ENCODE measurements at regions of chr4 and their contacts with region 1.

Region 1: GRCh38 chr4:78644744-78645330 is 93.3 kb downstream of the ANXA3 start:
- DNase-seq: peak; percentile 24 to 74
- ATAC-seq: peak; percentile 81 to 96 (median 90)
- H3K4me3 ChIP-seq: no peak overlapping the region
- H3K27ac ChIP-seq: peak overlapping the region in 7 of 10 donors; percentile 68 to 90 (median 73)
- H3K4me1 ChIP-seq: peaks cover 0 to 48% (median 26%) of the 10 kb centered on the region in 9 donors
- H3K27me3 ChIP-seq: no peaks in the 10 kb centered on the region
- CTCF ChIP-seq: peak; percentile 80 to 98 (median 93)

Region 2: DNA sequence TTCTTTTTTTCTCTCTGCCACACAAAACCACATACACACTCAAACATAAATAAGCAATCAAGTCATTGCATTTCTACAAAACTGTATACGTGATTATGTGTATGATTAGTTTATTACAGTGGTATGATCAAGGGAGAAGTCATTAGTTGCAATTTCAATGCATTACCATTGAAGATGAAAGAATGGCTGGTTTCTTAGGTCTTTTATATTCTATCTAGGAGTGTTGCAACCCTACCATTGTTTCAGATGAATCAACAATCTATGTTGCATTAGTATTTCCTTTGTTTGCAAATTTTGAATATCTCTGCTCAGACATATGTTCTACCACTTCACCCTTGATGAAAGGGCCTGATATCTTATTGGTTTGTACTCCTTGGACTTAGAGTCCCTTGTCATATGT is 86.4 kb before region 1 on chr4:
- intact Hi-C with region 1: loop called in 2 of 10 experiments (anchors 5 to 10 kb)
- DNase-seq: no peak
- ATAC-seq: no peak
- H3K4me3 ChIP-seq: no peak overlapping the region
- H3K27ac ChIP-seq: no peak overlapping the region
- H3K4me1 ChIP-seq: peaks cover 0 to 49% (median 14%) of the 10 kb centered on the region in 9 donors
- H3K27me3 ChIP-seq: no peaks in the 10 kb centered on the region
- CTCF ChIP-seq: no peak

Region 3: DNA sequence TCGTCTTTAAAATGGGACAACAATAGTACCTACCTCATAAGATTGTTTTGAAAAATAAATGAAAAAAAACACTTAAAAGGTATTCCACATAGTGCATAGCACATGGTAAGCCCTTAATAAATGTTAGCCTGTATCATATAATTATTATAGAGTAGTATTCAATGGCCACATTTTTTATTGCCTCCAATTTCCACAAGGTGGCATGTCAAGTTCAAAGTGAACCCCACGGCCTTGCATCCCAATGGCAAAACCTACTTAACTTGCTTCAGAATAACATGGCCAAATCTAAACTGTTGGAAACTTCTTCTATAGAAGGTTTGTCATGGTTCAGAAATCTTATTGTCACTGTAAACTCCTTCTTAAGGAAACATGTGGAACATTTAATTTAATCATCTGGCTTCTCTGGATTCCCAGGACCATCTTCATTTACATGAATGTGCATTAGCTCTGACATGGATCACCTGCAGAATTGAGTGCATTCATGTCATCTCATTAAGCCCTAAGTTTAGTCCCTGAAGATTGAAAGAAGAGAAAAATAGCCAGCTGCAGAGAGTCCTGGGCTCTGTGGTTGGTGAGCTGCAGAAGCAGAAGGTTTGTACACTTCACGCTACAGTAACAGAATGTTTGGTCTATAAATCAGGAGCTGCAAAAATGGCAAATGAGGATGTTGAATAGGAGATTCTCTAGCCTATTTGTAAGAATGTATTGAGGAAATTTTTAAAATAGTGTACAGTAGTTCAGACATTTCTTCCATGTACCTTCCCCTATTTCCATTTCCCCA is 32.2 kb before region 1 on chr4:
- intact Hi-C with region 1: loop called in 1 of 10 experiments (anchors 5 kb)
- DNase-seq: peak in 1 of 2 donors; percentile 34
- ATAC-seq: peak; percentile 26 to 83 (median 68)
- H3K4me3 ChIP-seq: no peak overlapping the region
- H3K27ac ChIP-seq: no peak overlapping the region
- H3K4me1 ChIP-seq: peaks cover 0 to 37% (median 13%) of the 10 kb centered on the region in 9 donors
- H3K27me3 ChIP-seq: no peaks in the 10 kb centered on the region
- CTCF ChIP-seq: peak; percentile 32 to 78 (median 66)

Region 4: GRCh38 chr4:78864405-78865024 is 219.7 kb after region 1 on chr4:
- intact Hi-C with region 1: loop called in 4 of 10 experiments (anchors 5 to 10 kb)
- DNase-seq: peak in 1 of 2 donors; percentile 54
- ATAC-seq: peak in 6 of 8 donors; percentile 47 to 68 (median 61)
- H3K4me3 ChIP-seq: no peak overlapping the region
- H3K27ac ChIP-seq: no peak overlapping the region
- H3K4me1 ChIP-seq: peaks cover 0 to 6% (median 0%) of the 10 kb centered on the region in 9 donors
- H3K27me3 ChIP-seq: no peaks in the 10 kb centered on the region
- CTCF ChIP-seq: peak; percentile 46 to 93 (median 85)

Measured in heart right ventricle (tissue), 16 donors.